ENCODE measurements at regions of chr17 and their contacts with region 1.

Region 1: GRCh38 chr17:72090108-72090507 is 30.7 kb upstream of the SOX9 start:
- DNase-seq: no peak
- H3K4me3 ChIP-seq: no peak overlapping the region
- H3K27ac ChIP-seq: no peak overlapping the region
- H3K4me1 ChIP-seq: no peaks in the 10 kb centered on the region
- H3K27me3 ChIP-seq: no peaks in the 10 kb centered on the region
- CTCF ChIP-seq: no peak
- EP300 ChIP-seq: no peak
- POLR2A ChIP-seq: no peak
- RAD21 ChIP-seq: no peak

Region 2: DNA sequence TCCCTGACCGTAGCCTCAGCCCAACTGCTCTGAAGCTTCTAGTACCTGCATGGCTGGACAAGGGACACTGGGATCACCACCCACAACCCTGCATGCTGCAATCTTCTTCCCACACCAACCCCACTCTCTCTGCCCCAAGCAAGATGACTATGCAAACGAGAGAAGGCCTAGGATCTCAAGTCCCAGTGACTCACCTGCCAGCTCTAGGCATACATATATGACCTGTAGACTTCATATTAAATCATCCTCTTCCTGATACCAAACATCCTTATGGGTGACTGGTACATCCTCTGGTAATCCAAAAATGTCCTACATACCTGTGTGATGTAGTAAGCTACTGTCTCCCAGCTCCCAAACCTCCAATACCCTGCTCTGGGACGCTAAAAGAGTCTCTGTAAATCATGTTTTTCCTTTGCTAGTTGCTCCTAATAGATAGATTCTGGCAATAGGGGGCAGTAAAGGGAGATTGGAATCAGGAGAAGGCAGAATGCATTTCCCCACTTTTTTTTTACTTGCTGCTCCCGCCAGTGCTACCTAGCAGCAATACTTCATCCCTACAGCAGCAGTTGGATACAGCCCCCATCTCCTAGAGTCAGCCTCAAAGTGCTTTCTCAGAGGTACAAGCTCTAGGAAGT is 12.7 kb before region 1 on chr17:
- CTCF ChIA-PET with region 1: interaction called, 16 read pairs
- POLR2A ChIA-PET with region 1: no interaction called
- DNase-seq: no peak
- H3K4me3 ChIP-seq: no peak overlapping the region
- H3K27ac ChIP-seq: no peak overlapping the region
- H3K4me1 ChIP-seq: no peaks in the 10 kb centered on the region
- H3K27me3 ChIP-seq: no peaks in the 10 kb centered on the region
- CTCF ChIP-seq: peak in 2 of 3 experiments; percentile 14 to 51; a peak in 2 of 4 replicates
- EP300 ChIP-seq: no peak
- POLR2A ChIP-seq: no peak
- RAD21 ChIP-seq: peak; percentile 36 to 44

Measured in H1 (cell line).